Activated B cell treated with CpG ODN at 0.5 μM for 24 hours (primary cell): ENCODE measurements at regions of chr6 and their contacts with region 1.

Region 1: GRCh38 chr6:34887753-34888513 is at the start of gene TAF11:
- DNase-seq: peak; percentile 82
- ATAC-seq: peak; percentile 67
- H3K4me3 Mint-ChIP-seq: peak within 1 kb of the TSS; percentile 98
- H3K27ac Mint-ChIP-seq: peak within 1 kb of the TSS; percentile 97
- H3K4me1 Mint-ChIP-seq: peaks cover 52% of the 10 kb centered on the region
- H3K27me3 Mint-ChIP-seq: no peaks in the 10 kb centered on the region
- CTCF ChIP-seq: no peak
- total RNA-seq, gene TAF11: 27.6 and 28.0 TPM in 2 replicates

Region 2: GRCh38 chr6:34425498-34426410 is 462.2 kb before region 1 on chr6 and contains the start of gene RPS10:
- CTCF ChIA-PET with region 1: no interaction called
- POLR2A ChIA-PET with region 1: interaction called, 6 read pairs
- intact Hi-C with region 1: loop called (anchors 2 kb)
- DNase-seq: peak; percentile 97
- ATAC-seq: peak; percentile 99
- H3K4me3 Mint-ChIP-seq: peak within 1 kb of the TSS; percentile 97
- H3K27ac Mint-ChIP-seq: peak within 1 kb of the TSS; percentile 97
- H3K4me1 Mint-ChIP-seq: peaks cover 29% of the 10 kb centered on the region
- H3K27me3 Mint-ChIP-seq: no peaks in the 10 kb centered on the region
- CTCF ChIP-seq: no peak
- total RNA-seq, gene RPS10: 2,903 and 3,402 TPM in 2 replicates

Region 3: DNA sequence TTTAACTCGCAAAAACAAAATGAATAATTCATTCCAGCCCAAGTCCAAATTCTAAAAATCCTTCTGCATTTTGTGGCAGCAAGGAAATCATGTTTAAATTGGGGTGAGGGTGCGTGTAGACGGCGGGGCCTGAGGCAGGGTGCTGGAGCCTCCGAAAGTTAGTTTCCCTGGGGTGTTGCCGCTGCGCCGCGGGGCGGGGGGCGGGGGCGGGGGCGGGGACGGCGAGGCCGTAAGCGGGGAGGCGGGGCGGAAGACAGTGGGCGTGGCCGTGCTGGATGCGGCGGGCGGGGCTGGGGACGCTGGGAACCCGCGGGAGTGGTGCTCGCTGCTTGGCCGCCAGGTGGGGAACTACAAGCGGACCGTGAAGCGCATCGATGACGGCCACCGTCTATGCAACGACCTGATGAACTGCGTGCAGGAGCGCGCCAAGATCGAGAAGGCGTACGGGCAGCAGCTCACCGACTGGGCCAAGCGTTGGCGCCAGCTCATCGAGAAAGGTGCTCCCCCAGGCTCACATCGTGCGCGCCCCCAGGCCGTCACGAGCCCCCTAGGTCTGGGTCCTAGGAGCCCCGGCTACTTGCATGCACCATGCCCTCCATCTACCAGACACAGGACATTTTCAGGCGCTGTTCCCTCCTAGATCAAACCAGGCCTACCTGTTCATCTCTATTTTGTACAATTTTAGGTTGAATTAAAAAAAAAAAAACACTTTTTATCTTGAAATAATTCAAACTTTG is 360.8 kb before region 1 on chr6:
- CTCF ChIA-PET with region 1: no interaction called
- POLR2A ChIA-PET with region 1: no interaction called
- intact Hi-C with region 1: loop called (anchors 1 kb)
- DNase-seq: peak; percentile 92
- ATAC-seq: peak; percentile 98
- H3K4me3 Mint-ChIP-seq: peak overlapping the region; percentile 69
- H3K27ac Mint-ChIP-seq: peak overlapping the region; percentile 66
- H3K4me1 Mint-ChIP-seq: peaks cover 7% of the 10 kb centered on the region
- H3K27me3 Mint-ChIP-seq: no peaks in the 10 kb centered on the region
- CTCF ChIP-seq: no peak

Region 4: DNA sequence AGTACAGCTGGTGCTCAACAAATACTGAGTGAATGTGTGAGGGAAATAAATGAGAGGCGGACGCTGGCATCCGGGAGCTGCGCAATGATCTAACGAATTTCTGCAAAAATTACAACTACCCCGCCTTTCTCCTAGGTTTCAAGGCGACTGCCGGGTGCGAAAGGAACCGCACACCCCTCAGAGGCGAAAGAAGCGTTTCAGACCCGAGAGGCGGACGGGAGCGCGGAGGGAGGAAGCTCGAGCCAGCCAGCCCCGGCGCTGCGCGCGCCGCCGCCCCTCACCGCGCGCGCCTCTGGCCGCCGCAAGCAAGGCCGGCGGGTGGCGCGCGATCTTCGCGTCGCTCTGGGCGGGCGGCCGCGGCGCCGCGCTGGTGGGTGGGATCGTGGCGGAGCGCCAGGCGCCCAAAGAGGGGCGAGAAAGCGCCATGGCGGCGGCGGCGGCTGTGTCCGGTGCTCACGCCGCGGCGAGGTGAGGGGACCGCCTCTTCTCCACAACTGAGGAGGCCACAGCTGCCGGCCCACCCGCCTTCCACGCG is 96.2 kb before region 1 on chr6 and contains the start of gene BLTP3A:
- CTCF ChIA-PET with region 1: no interaction called
- POLR2A ChIA-PET with region 1: interaction called, 32 read pairs
- intact Hi-C with region 1: loop called (anchors 1 kb)
- DNase-seq: peak; percentile 78
- ATAC-seq: peak; percentile 93
- H3K4me3 Mint-ChIP-seq: peak within 1 kb of the TSS; percentile 96
- H3K27ac Mint-ChIP-seq: peak within 1 kb of the TSS; percentile 93
- H3K4me1 Mint-ChIP-seq: peaks cover 24% of the 10 kb centered on the region
- H3K27me3 Mint-ChIP-seq: no peaks in the 10 kb centered on the region
- CTCF ChIP-seq: no peak
- total RNA-seq, gene BLTP3A: 10.8 and 12.6 TPM in 2 replicates

Region 5: DNA sequence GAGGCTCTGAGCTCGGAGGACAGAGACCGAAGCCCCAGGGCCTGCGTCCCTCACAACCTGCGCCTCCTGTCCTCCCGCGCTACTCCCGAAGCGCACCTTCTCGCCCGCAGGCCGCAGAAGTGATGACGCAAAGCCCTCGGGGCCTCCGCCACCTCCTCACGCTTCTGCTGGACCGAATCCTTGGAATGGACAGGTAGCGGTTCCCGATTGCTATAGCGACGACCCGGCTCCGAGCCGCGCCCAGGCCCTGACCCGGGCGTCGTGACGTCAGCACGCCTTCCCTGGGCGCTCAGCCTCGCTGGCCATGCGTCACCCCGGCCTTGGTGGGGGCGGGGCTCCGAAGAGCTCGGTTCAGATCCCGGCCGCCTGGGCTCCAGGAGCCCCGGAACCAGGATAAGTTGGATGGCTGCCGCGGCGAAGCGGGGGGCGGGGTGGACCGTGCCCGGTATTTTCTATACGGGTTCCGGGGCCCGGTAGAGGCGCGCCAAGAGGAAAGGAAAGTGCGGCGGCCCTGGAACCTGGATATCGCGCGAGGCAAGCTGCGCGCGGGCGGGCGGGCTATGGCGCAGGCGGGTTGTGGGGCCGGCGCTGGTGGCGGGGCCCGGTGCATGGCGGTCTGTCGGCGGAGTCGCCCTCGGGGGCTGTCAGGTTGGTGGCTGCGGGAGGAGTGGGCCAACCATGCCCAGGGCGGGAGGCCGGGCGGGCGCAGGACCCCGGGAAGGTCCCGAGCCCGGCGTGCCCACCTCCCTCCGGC is 371.4 kb after region 1 on chr6 and contains the start of gene ZNF76:
- CTCF ChIA-PET with region 1: no interaction called
- POLR2A ChIA-PET with region 1: interaction called, 3 read pairs
- intact Hi-C with region 1: loop called (anchors 1 kb)
- DNase-seq: peak; percentile 89
- ATAC-seq: peak; percentile 81
- H3K4me3 Mint-ChIP-seq: peak within 1 kb of the TSS; percentile 97
- H3K27ac Mint-ChIP-seq: peak within 1 kb of the TSS; percentile 93
- H3K4me1 Mint-ChIP-seq: peaks cover 53% of the 10 kb centered on the region
- H3K27me3 Mint-ChIP-seq: no peaks in the 10 kb centered on the region
- CTCF ChIP-seq: no peak
- total RNA-seq, gene ZNF76: 54.8 and 57.9 TPM in 2 replicates

Region 6: DNA sequence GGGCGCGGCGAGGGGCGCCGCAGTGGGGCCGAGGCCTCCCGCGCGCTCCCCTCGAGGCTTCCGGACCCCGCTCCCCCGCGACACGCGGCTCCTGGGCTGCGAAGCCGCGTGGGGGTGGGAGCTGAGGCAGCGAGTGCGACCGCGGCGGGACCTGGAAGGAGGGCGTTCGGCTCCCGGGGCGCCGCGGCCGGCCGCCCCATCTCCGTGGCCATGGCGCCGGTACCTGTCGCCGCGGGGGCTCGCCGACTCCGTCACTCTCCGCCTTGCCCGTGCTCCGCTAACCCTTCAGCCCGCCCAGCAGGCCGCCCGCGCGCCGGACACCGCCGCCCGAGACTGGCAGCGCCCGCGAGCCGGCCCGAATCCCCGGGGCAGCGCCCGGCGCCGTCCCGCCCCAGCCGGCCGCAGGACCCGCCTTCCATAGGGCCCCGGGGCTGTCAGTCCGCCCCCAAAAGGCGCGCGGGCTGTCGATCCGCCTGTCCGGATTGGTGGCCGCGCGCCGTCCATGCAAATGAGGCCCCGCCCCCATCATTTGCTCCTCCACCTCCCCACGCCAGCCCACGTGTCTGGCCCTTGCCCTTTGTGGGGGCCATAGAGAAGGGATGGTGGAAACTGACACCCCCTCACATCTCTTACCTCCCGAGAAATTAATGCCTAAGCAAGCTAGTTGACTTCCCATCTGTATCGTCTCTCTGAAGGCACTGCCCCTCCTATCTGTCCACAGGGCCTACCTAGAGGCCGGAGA is 800.8 kb after region 1 on chr6 and contains the start of gene FKBP5:
- CTCF ChIA-PET with region 1: no interaction called
- POLR2A ChIA-PET with region 1: no interaction called
- intact Hi-C with region 1: loop called (anchors 5 kb)
- DNase-seq: peak; percentile 86
- ATAC-seq: peak; percentile 96
- H3K4me3 Mint-ChIP-seq: peak within 1 kb of the TSS; percentile 93
- H3K27ac Mint-ChIP-seq: peak within 1 kb of the TSS; percentile 87
- H3K4me1 Mint-ChIP-seq: peaks cover 21% of the 10 kb centered on the region
- H3K27me3 Mint-ChIP-seq: no peaks in the 10 kb centered on the region
- CTCF ChIP-seq: no peak
- total RNA-seq, gene FKBP5: 17.1 TPM in 2 replicates